Uterus (tissue), 4 donors: ENCODE measurements at regions of chr1 and their contacts with region 1.

Region 1: DNA sequence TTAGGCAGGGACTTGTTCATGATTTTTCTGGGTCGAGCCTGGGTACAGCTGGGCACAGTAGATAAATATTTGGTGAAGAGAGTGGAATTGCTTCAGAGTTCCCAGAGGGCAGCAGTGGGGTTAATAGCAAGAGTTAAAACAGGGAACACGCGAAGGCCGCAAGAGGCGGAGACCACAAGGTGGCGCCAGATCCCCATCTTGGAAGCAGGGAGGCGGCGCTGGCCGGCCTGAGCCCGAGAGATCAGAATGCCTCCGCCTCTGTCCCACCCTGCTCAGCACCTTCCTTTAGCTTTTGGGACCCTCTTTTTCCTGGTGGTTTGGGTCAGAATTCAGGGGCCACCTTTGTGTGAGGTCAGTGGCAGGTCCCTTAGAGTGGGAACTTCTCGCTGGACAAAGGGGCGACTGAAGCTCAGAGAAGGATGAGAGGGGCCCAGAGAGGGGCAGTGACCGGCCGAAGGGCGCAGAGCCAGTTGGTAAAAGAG is 6.5 kb upstream of the PADI2 start:
- DNase-seq: peak; percentile 71 to 78
- H3K4me3 ChIP-seq: no peak overlapping the region
- H3K27ac ChIP-seq: no peak overlapping the region
- H3K4me1 ChIP-seq: peaks cover 0 to 4% of the 10 kb centered on the region in 2 donors
- H3K27me3 ChIP-seq: no peaks in the 10 kb centered on the region
- CTCF ChIP-seq: peak; percentile 84 to 97 (median 88)
- POLR2A ChIP-seq: no peak

Region 2: GRCh38 chr1:17236779-17237560 is 111.2 kb after region 1 on chr1:
- intact Hi-C with region 1: loop called (anchors 10 kb)
- DNase-seq: peak; percentile 66 to 72
- H3K4me3 ChIP-seq: no peak overlapping the region
- H3K27ac ChIP-seq: no peak overlapping the region
- H3K4me1 ChIP-seq: no peaks in the 10 kb centered on the region
- H3K27me3 ChIP-seq: no peaks in the 10 kb centered on the region
- CTCF ChIP-seq: peak; percentile 62 to 85 (median 80)
- POLR2A ChIP-seq: no peak